ENCODE measurements at regions of chr18 and their contacts with region 1.

Region 1: DNA sequence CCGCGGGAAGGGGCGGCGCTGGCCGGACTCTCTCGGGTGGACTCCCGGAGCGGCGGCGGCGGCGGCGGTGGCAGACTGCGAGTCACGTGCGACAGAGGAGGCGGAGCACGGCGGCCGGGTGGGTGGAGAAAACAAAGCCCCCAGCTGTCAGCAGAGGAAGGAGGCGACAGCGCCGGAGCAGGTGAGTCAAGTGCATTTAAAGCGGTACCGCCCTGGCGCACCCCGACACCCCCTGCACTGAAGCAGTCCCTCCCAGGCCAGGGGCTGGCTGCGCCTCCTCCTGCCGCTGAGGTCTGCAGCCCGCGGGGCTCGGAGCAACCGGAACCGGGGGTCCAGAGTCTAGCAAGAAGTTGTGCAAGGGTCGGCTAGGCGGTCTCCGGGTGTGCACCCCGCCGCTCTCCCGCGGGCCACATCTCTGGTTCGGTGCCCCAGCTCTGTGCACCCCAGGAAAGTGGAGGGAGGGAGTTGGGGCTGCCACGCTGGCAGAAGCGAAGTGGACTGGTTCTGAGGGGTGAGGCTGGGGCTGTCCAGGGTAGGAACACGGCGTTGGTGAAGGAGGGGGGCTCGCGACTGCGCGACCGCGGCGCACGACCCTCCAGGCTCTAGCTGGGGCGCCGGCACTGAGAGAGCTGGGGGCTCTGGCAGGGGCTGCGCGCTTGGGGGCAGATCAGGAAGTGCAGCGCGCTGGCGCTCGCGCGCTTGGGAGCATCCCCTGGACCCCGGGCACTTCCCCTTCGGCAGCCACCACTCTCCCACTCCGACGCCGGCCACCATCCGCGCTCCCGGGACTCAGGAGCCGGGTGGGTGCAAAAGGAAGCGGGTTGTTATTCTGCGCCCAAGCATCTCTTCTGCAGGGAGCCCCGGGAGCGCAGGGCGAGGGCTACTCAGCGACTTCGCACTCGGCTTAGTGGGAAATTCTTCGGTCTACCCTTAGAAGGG is 64.0 kb upstream of the MAPRE2 start:
- DNase-seq: peak; percentile 55 to 89 (median 85)
- ATAC-seq: peak; percentile 81
- H3K4me3 ChIP-seq: peak overlapping the region; percentile 87 to 93
- H3K4me3 Mint-ChIP-seq: peak overlapping the region; percentile 96
- H3K27ac ChIP-seq: peak overlapping the region in 1 of 2 experiments; percentile 35
- H3K27ac Mint-ChIP-seq: peak overlapping the region; percentile 70
- H3K4me1 ChIP-seq: peaks cover 11% of the 10 kb centered on the region
- H3K4me1 Mint-ChIP-seq: peaks cover 26% of the 10 kb centered on the region
- H3K27me3 ChIP-seq: no peaks in the 10 kb centered on the region
- H3K27me3 Mint-ChIP-seq: no peaks in the 10 kb centered on the region
- CTCF ChIP-seq: no peak

Region 2: GRCh38 chr18:34729264-34729663 is 247.9 kb before region 1 on chr18:
- CTCF ChIA-PET with region 1: no interaction called
- POLR2A ChIA-PET with region 1: no interaction called
- intact Hi-C with region 1: no loop called
- DNase-seq: peak in 2 of 9 experiments; percentile 3 to 11
- ATAC-seq: no peak
- H3K4me3 ChIP-seq: no peak overlapping the region
- H3K4me3 Mint-ChIP-seq: no peak overlapping the region
- H3K27ac ChIP-seq: no peak overlapping the region
- H3K27ac Mint-ChIP-seq: no peak overlapping the region
- H3K4me1 ChIP-seq: no peaks in the 10 kb centered on the region
- H3K4me1 Mint-ChIP-seq: peaks cover 2% of the 10 kb centered on the region
- H3K27me3 ChIP-seq: no peaks in the 10 kb centered on the region
- H3K27me3 Mint-ChIP-seq: peaks cover 3% of the 10 kb centered on the region
- CTCF ChIP-seq: peak; percentile 28

Region 3: GRCh38 chr18:34857320-34857719 is 119.8 kb before region 1 on chr18:
- CTCF ChIA-PET with region 1: no interaction called
- POLR2A ChIA-PET with region 1: interaction called, 3 read pairs
- intact Hi-C with region 1: loop called (anchors 1 to 2 kb)
- DNase-seq: no peak
- ATAC-seq: no peak
- H3K4me3 ChIP-seq: no peak overlapping the region
- H3K4me3 Mint-ChIP-seq: no peak overlapping the region
- H3K27ac ChIP-seq: no peak overlapping the region
- H3K27ac Mint-ChIP-seq: no peak overlapping the region
- H3K4me1 ChIP-seq: no peaks in the 10 kb centered on the region
- H3K4me1 Mint-ChIP-seq: peaks cover 7% of the 10 kb centered on the region
- H3K27me3 ChIP-seq: no peaks in the 10 kb centered on the region
- H3K27me3 Mint-ChIP-seq: no peaks in the 10 kb centered on the region
- CTCF ChIP-seq: no peak

Region 4: GRCh38 chr18:34929336-34929780 is 47.8 kb before region 1 on chr18:
- CTCF ChIA-PET with region 1: no interaction called
- POLR2A ChIA-PET with region 1: no interaction called
- intact Hi-C with region 1: no loop called
- DNase-seq: no peak
- ATAC-seq: no peak
- H3K4me3 ChIP-seq: no peak overlapping the region
- H3K4me3 Mint-ChIP-seq: no peak overlapping the region
- H3K27ac ChIP-seq: no peak overlapping the region
- H3K27ac Mint-ChIP-seq: no peak overlapping the region
- H3K4me1 ChIP-seq: no peaks in the 10 kb centered on the region
- H3K4me1 Mint-ChIP-seq: no peaks in the 10 kb centered on the region
- H3K27me3 ChIP-seq: no peaks in the 10 kb centered on the region
- H3K27me3 Mint-ChIP-seq: no peaks in the 10 kb centered on the region
- CTCF ChIP-seq: no peak

Region 5: DNA sequence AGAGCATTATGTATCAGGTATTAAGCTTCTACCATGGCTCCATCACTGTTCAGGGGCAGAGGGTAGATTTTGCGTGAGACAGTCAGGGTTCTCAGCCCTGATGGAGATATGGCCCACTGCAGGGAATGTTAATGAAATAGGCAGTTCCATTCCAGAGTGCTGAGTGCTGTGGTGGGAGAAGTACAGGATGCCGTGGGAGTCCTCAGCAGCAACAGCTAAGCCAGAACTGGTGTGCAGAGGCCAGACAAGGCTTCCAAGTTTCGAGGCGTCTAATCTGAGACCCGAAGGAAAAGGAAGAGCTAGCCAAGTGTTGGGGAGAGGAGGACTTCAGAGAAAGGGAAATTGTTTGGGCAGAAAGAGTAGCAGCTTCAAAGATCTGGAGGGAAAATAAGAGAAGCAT is 33.8 kb after region 1 on chr18:
- CTCF ChIA-PET with region 1: no interaction called
- POLR2A ChIA-PET with region 1: no interaction called
- intact Hi-C with region 1: no loop called
- DNase-seq: no peak
- ATAC-seq: no peak
- H3K4me3 ChIP-seq: no peak overlapping the region
- H3K4me3 Mint-ChIP-seq: no peak overlapping the region
- H3K27ac ChIP-seq: no peak overlapping the region
- H3K27ac Mint-ChIP-seq: no peak overlapping the region
- H3K4me1 ChIP-seq: no peaks in the 10 kb centered on the region
- H3K4me1 Mint-ChIP-seq: no peaks in the 10 kb centered on the region
- H3K27me3 ChIP-seq: no peaks in the 10 kb centered on the region
- H3K27me3 Mint-ChIP-seq: no peaks in the 10 kb centered on the region
- CTCF ChIP-seq: no peak

Region 6: DNA sequence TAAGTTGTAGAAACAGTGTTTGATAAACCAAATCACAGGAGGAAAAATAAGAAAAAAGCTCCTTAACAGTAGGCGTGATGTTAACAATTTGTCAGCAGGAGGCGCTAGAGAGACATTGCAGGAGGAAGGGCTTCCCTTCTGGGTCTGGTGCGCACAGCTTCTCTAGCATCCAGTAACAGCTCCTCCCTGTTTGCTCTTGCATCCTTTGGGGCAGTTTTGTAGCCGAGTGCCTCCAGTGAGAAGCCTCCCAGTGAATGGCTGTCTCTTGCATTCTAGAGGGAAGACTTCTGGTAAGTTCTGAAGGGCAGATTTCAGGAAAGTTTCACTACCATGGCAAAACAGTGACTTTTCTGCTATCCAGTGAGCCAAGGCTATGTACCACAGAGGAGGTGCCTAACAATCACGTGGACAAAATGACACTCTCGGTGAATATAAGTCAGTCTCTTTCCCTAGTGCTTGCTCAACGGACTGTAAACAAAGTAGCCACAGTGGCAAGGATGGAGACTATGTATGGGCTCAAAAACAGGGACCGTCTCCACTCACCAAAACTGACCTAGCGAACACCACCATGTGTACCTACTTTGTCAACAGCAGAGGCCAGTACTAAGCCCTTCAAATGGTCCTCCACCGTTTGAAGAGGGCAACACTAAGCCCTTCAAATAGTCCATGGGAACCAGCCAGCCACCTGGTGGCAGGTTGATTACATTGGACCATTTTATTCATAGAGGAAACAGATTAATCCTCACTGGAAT is 409.6 kb after region 1 on chr18:
- CTCF ChIA-PET with region 1: no interaction called
- POLR2A ChIA-PET with region 1: no interaction called
- intact Hi-C with region 1: loop called in 1 of 2 experiments (anchors 5 kb)
- DNase-seq: peak; percentile 18 to 88 (median 64)
- ATAC-seq: peak; percentile 99
- H3K4me3 ChIP-seq: no peak overlapping the region
- H3K4me3 Mint-ChIP-seq: no peak overlapping the region
- H3K27ac ChIP-seq: no peak overlapping the region
- H3K27ac Mint-ChIP-seq: no peak overlapping the region
- H3K4me1 ChIP-seq: no peaks in the 10 kb centered on the region
- H3K4me1 Mint-ChIP-seq: peaks cover 2% of the 10 kb centered on the region
- H3K27me3 ChIP-seq: peaks cover 0 to 4% of the 10 kb centered on the region in 2 experiments
- H3K27me3 Mint-ChIP-seq: peaks cover 19% of the 10 kb centered on the region
- CTCF ChIP-seq: peak; percentile 96

Region 7: DNA sequence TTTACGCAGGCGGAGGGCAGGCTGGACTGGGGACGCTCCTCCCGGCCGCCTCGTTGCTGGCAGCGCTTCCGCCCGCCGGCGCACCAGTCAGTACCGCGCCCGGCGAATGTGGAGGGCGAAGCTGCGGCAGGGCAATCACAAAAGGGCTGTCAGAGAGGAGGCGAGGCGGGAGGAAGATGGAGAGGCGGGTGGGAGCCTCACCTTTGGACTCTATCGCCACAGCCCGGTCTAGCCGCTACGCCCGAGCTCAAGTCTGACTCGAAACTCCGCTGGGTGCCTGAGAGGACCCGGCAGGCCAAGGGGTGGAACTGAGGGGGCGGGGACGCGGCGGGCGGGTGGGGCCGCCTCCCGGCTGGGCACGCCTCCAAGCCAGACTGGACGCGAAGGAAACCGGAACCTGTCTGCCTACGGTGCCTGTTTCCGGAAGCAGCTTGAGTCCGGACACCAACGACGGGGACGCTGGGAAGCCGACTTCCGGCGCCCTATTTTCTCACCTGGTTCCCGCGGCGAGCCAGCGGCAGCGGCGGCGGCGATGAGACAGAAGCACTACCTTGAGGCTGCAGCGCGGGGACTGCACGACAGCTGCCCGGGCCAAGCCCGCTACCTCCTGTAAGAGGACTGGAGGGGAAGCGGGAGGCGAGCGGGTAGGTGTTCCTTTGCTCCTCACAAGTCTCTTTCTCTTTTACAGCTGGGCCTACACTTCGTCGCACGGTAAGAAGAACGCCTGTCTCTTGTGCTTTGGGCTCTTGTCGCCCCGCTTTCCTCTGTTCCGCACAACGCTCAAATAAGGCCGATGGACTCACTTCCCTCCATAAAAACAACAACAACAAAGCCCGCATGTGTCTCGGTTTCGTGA is 995.3 kb after region 1 on chr18 and contains the start of gene RMP24:
- CTCF ChIA-PET with region 1: no interaction called
- POLR2A ChIA-PET with region 1: no interaction called
- intact Hi-C with region 1: loop called (anchors 5 to 10 kb)
- DNase-seq: peak; percentile 88 to 97 (median 93)
- ATAC-seq: peak; percentile 84
- H3K4me3 ChIP-seq: peak within 1 kb of the TSS; percentile 60 to 89
- H3K4me3 Mint-ChIP-seq: peak within 1 kb of the TSS; percentile 94
- H3K27ac ChIP-seq: peak within 1 kb of the TSS; percentile 57 to 90
- H3K27ac Mint-ChIP-seq: peak within 1 kb of the TSS; percentile 98
- H3K4me1 ChIP-seq: peaks cover 35% of the 10 kb centered on the region
- H3K4me1 Mint-ChIP-seq: peaks cover 65% of the 10 kb centered on the region
- H3K27me3 ChIP-seq: no peaks in the 10 kb centered on the region
- H3K27me3 Mint-ChIP-seq: no peaks in the 10 kb centered on the region
- CTCF ChIP-seq: no peak

Region 8: DNA sequence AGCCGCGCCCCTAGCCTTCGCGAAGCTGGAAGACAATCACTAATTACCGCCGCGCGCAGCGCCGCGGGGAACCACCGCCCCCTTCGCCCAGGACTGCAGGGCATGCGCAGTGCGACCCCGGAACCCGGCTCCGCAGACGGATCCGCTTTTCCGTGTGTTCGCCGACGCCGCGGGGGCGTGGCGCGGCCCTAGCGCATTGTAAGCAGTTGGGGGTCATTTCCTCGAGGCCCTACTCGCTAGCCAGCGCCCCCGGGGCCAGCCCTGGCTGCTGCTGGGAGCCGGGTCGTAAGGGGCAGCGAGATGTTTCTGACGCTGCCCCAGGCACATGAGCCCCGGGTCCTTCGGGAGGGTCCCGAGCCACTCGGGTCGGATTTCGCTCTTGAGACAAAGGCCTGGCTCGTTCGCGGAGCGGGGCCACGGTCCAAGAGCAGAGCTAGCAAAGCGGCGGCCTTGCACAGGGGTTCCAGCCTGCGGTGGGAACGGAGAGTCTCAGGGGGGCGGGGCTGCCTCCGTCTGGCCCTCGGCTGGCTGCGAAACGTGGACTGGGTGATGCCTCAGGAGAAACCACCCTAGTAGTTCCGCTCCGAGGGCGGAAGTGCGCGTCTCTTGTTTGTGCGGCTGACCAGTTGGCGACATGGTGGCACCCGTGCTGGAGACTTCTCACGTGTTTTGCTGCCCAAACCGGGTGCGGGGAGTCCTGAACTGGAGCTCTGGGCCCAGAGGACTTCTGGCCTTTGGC is 1152.3 kb after region 1 on chr18 and contains the starts of genes ELP2 and SLC39A6:
- CTCF ChIA-PET with region 1: no interaction called
- POLR2A ChIA-PET with region 1: no interaction called
- intact Hi-C with region 1: loop called in 1 of 2 experiments (anchors 10 kb)
- DNase-seq: peak; percentile 88 to 98 (median 96)
- ATAC-seq: peak; percentile 87
- H3K4me3 ChIP-seq: peak within 1 kb of the TSS; percentile 97 to 100
- H3K4me3 Mint-ChIP-seq: peak within 1 kb of the TSS; percentile 95
- H3K27ac ChIP-seq: peak within 1 kb of the TSS; percentile 94 to 98
- H3K27ac Mint-ChIP-seq: peak within 1 kb of the TSS; percentile 98
- H3K4me1 ChIP-seq: peaks cover 47% of the 10 kb centered on the region
- H3K4me1 Mint-ChIP-seq: peaks cover 68% of the 10 kb centered on the region
- H3K27me3 ChIP-seq: no peaks in the 10 kb centered on the region
- H3K27me3 Mint-ChIP-seq: no peaks in the 10 kb centered on the region
- CTCF ChIP-seq: no peak
- total RNA-seq, gene ELP2: 212 to 222 TPM
- total RNA-seq, gene SLC39A6: 12.3 to 14.4 TPM

Measured in CD8-positive, alpha-beta T cell (primary cell).